Activated B cell treated with CpG ODN at 0.5 μM for 24 hours (primary cell): ENCODE measurements at regions of chr5 and their contacts with region 1.

Region 1: GRCh38 chr5:96807075-96807654 is 580 bp downstream of the ERAP1 start:
- DNase-seq: no peak
- ATAC-seq: peak; percentile 12
- H3K4me3 Mint-ChIP-seq: peak overlapping the region; percentile 97
- H3K27ac Mint-ChIP-seq: peak overlapping the region; percentile 99
- H3K4me1 Mint-ChIP-seq: peaks cover 48% of the 10 kb centered on the region
- H3K27me3 Mint-ChIP-seq: no peaks in the 10 kb centered on the region
- CTCF ChIP-seq: no peak

Region 2: DNA sequence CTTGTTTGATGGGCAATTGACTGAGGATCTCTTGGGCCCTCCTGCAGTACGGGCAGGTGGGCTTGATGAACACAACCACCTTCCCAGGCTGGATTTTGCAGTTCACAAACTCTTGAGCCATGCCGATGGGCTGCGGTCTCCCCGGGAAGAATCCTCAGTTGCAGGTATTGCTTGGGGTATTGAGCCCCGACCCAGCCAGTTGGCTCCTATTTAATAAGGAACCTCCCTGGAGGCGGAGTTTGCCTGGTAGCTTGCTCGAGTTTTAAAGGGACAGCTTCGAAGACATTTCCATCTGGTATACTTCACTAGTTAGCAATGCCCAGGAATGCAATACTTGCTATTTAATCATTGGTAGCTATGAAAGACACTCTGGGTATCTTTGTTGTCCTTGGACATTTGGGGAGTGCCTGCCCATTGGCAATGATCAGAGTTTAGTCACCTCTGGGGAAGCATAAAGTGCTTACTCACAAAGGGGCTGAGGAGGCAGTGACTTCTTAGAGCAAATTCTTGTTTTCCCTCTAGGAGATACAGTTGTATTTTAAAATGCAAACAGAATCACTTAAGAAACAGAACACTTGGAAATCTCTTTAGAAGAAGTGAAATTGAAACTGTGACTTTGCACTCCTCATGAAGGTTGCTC is 984.5 kb before region 1 on chr5 and contains the start of gene GLRX:
- CTCF ChIA-PET with region 1: no interaction called
- POLR2A ChIA-PET with region 1: no interaction called
- intact Hi-C with region 1: loop called (anchors 10 kb)
- DNase-seq: no peak
- ATAC-seq: peak; percentile 30
- H3K4me3 Mint-ChIP-seq: peak within 1 kb of the TSS; percentile 95
- H3K27ac Mint-ChIP-seq: peak within 1 kb of the TSS; percentile 98
- H3K4me1 Mint-ChIP-seq: peaks cover 72% of the 10 kb centered on the region
- H3K27me3 Mint-ChIP-seq: no peaks in the 10 kb centered on the region
- CTCF ChIP-seq: no peak
- total RNA-seq, gene GLRX: 55.4 and 60.2 TPM in 2 replicates

Region 3: DNA sequence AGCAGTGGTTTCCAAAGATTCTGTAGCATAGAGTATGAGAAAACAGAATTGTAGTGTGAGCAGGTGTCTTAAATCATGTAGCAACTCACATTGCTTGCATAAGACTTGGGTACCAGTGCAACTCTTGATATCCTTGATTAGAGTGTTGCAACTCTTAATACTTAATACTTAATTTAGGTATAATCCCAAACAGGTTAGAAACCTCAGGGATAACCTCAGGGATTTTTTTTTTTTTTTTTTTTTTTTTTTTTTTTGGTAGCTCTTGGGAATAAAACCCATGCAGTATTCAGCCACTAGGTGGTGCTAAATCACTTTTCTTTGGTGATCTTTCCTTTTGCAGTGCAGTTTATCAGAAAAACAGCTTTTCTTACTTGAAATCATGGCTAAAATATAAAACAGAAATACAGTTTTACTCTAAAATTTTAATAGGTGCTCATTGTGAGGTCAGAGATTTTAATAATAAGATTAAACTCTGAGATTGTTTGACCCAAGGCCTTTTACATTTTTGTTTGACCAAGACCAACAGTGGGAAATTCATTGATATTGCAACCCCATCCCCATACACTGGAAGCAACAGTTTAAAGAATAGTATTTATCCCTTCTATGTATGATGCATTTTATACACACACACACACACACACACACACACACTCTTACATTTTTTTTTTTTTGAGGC is 54.7 kb before region 1 on chr5:
- CTCF ChIA-PET with region 1: interaction called, 11 read pairs
- POLR2A ChIA-PET with region 1: interaction called, 3 read pairs
- intact Hi-C with region 1: no loop called
- DNase-seq: no peak
- ATAC-seq: no peak
- H3K4me3 Mint-ChIP-seq: no peak overlapping the region
- H3K27ac Mint-ChIP-seq: no peak overlapping the region
- H3K4me1 Mint-ChIP-seq: no peaks in the 10 kb centered on the region
- H3K27me3 Mint-ChIP-seq: no peaks in the 10 kb centered on the region
- CTCF ChIP-seq: peak; percentile 76

Region 4: GRCh38 chr5:96852759-96853158 is 45.6 kb after region 1 on chr5:
- CTCF ChIA-PET with region 1: no interaction called
- POLR2A ChIA-PET with region 1: no interaction called
- intact Hi-C with region 1: no loop called
- DNase-seq: no peak
- ATAC-seq: no peak
- H3K4me3 Mint-ChIP-seq: no peak overlapping the region
- H3K27ac Mint-ChIP-seq: no peak overlapping the region
- H3K4me1 Mint-ChIP-seq: no peaks in the 10 kb centered on the region
- H3K27me3 Mint-ChIP-seq: peaks cover 2% of the 10 kb centered on the region
- CTCF ChIP-seq: no peak

Region 5: GRCh38 chr5:96876292-96876850 is 69.2 kb after region 1 on chr5 and contains the start of gene ERAP2:
- CTCF ChIA-PET with region 1: interaction called, 5 read pairs
- POLR2A ChIA-PET with region 1: interaction called, 30 read pairs
- intact Hi-C with region 1: no loop called
- DNase-seq: no peak
- ATAC-seq: peak; percentile 53
- H3K4me3 Mint-ChIP-seq: peak within 1 kb of the TSS; percentile 98
- H3K27ac Mint-ChIP-seq: peak within 1 kb of the TSS; percentile 96
- H3K4me1 Mint-ChIP-seq: peaks cover 88% of the 10 kb centered on the region
- H3K27me3 Mint-ChIP-seq: no peaks in the 10 kb centered on the region
- CTCF ChIP-seq: no peak
- total RNA-seq, gene ERAP2: 63.1 and 80.9 TPM in 2 replicates

Region 6: GRCh38 chr5:96997265-96997859 is 190.2 kb after region 1 on chr5:
- CTCF ChIA-PET with region 1: interaction called, 3 read pairs
- POLR2A ChIA-PET with region 1: interaction called, 11 read pairs
- intact Hi-C with region 1: no loop called
- DNase-seq: no peak
- ATAC-seq: peak; percentile 68
- H3K4me3 Mint-ChIP-seq: no peak overlapping the region
- H3K27ac Mint-ChIP-seq: no peak overlapping the region
- H3K4me1 Mint-ChIP-seq: peaks cover 6% of the 10 kb centered on the region
- H3K27me3 Mint-ChIP-seq: no peaks in the 10 kb centered on the region
- CTCF ChIP-seq: no peak

Region 7: GRCh38 chr5:97162045-97162444 is 354.9 kb after region 1 on chr5:
- CTCF ChIA-PET with region 1: interaction called, 10 read pairs
- POLR2A ChIA-PET with region 1: interaction called, 3 read pairs
- intact Hi-C with region 1: loop called (anchors 1 kb)
- DNase-seq: no peak
- ATAC-seq: peak; percentile 31
- H3K4me3 Mint-ChIP-seq: no peak overlapping the region
- H3K27ac Mint-ChIP-seq: no peak overlapping the region
- H3K4me1 Mint-ChIP-seq: peaks cover 3% of the 10 kb centered on the region
- H3K27me3 Mint-ChIP-seq: no peaks in the 10 kb centered on the region
- CTCF ChIP-seq: peak; percentile 68

Region 8: GRCh38 chr5:98773464-98774191 is 1966.5 kb after region 1 on chr5 and contains the start of gene RGMB:
- CTCF ChIA-PET with region 1: no interaction called
- POLR2A ChIA-PET with region 1: interaction called, 6 read pairs
- intact Hi-C with region 1: loop called (anchors 5 kb)
- DNase-seq: peak; percentile 83
- ATAC-seq: peak; percentile 89
- H3K4me3 Mint-ChIP-seq: peak within 1 kb of the TSS; percentile 96
- H3K27ac Mint-ChIP-seq: peak within 1 kb of the TSS; percentile 96
- H3K4me1 Mint-ChIP-seq: peaks cover 55% of the 10 kb centered on the region
- H3K27me3 Mint-ChIP-seq: peaks cover 2% of the 10 kb centered on the region
- CTCF ChIP-seq: no peak
- total RNA-seq, gene RGMB: 12.7 and 13.8 TPM in 2 replicates